Activated CD4-positive, alpha-beta memory T cell treated with anti-CD3 and anti-CD28 coated beads for 36 hours (primary cell): ENCODE measurements at regions of chr9 and their contacts with region 1.

Region 1: DNA sequence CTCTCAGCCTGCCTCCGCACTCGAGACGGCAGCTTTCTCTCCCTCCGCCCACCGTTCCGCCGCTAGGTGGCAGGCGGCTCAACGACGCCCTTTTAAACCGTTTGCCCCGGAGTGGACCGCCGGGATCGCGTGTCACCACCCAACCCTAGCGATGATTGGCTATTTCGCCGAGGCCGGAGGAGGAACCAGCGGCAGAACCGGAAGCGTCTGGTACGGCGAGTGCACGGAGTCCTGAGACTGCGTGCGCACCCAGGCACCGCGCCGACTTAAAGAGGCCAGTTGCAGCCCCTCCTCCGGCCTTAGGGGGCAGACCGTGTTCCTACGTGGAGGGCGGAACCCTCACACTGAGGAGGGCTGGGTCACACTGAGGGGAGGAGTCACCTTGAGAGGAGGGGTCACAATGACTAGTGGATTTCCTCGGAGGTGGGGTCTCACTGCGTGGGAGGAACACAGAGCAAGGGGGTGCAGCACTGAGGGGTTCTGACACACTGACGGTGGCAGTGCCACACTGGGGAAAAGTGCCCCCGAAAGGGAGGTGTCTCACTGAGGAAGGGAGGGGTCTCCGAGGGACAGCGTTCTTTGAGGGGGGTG is 980 bp upstream of the TESK1 start:
- DNase-seq: peak; percentile 100
- H3K4me3 Mint-ChIP-seq: peak overlapping the region; percentile 97
- H3K27ac Mint-ChIP-seq: peak overlapping the region; percentile 98
- H3K4me1 Mint-ChIP-seq: peaks cover 29% of the 10 kb centered on the region
- H3K27me3 Mint-ChIP-seq: no peaks in the 10 kb centered on the region

Region 2: DNA sequence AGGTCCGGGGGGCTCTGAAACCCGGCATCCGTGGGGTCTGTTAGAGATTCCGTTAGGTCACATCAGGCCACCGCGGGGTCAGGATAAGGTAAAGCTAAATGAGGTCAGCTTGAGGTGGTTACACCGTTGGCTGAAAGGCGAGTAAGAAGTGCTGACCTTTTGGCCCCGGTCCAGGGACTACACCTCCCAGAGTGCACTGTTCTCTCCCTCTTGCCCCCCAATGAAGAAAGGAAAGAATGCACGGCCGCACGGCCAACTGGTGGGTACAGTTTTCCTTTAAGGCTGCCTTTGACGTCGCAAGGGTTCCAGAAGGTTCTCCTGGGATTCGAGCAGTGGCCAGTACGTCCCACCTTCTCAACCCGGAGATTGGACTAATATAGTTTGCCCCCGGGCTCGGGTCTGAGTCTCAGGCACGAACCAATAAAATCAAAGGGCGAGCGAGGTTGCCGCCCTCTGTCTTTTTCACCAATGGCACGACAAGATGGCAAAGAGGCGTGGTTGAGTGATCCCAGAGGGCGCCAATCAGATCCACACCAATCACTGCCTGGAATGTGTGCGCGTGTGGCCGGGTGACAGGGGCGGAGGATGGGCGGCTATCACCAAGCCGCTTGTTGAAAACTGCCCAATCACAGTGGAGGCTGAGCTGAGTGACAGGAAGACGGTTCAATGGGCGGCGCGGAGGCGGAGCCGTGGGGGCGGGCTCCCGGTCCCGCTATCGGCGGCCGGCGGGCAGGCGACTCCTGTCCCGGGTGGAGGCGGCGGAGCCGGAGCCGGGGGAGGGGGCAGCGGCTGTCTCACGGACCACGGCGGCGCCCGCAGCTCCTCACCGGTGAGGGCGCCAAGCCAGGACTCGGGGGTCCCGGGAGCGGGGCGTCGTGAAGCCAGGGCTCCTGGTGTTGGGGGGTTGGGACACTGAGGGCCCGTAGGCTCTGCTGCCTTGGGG is 614.8 kb before region 1 on chr9 and contains the start of gene DNAJB5:
- CTCF ChIA-PET with region 1: interaction called, 3 read pairs
- POLR2A ChIA-PET with region 1: no interaction called
- intact Hi-C with region 1: loop called (anchors 1 kb)
- DNase-seq: peak; percentile 99
- H3K4me3 Mint-ChIP-seq: peak within 1 kb of the TSS; percentile 89
- H3K27ac Mint-ChIP-seq: peak within 1 kb of the TSS; percentile 89
- H3K4me1 Mint-ChIP-seq: peaks cover 81% of the 10 kb centered on the region
- H3K27me3 Mint-ChIP-seq: no peaks in the 10 kb centered on the region
- total RNA-seq, gene DNAJB5: 11.5 to 12.0 TPM

Region 3: DNA sequence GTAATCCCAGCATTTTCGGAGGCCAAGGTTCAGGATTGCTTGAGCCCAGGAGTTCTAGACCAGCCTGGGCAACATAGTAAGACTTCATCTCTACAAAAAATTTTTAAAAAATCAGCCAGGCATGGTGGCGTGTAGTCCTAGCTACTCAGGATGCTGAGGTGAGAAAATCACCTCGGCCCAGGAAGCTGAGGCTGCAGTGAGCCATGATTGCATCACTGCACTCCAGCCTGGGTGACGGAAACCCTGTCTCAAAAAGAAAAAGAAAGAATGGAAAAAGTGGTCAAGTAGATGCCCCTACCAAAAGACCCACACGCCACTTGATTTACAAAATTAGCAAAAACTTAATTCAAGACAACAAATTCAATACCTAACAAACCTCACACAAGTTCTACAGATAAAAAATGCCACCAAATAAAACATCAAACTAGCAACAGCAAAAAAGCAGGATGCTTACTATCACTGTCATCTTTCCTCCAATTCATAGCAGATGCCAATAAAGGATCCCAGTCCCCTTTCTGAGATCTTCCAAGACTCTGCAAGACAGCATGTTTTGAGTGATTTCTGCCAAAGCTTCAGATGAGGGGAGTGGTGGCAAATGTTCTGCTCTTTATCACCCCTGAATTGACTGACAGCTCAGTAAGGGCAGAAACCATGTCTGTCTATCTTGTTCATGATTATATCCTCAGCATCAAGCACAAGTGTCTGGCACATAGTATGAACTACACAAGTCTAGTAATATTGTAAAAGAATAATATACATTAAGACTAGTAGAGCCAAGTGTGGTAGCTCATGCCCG is 33.2 kb before region 1 on chr9:
- CTCF ChIA-PET with region 1: interaction called, 6 read pairs
- POLR2A ChIA-PET with region 1: no interaction called
- intact Hi-C with region 1: loop called (anchors 1 kb)
- DNase-seq: peak; percentile 77
- H3K4me3 Mint-ChIP-seq: peak overlapping the region; percentile 47
- H3K27ac Mint-ChIP-seq: peak overlapping the region; percentile 98
- H3K4me1 Mint-ChIP-seq: peaks cover 43% of the 10 kb centered on the region
- H3K27me3 Mint-ChIP-seq: no peaks in the 10 kb centered on the region

Region 4: DNA sequence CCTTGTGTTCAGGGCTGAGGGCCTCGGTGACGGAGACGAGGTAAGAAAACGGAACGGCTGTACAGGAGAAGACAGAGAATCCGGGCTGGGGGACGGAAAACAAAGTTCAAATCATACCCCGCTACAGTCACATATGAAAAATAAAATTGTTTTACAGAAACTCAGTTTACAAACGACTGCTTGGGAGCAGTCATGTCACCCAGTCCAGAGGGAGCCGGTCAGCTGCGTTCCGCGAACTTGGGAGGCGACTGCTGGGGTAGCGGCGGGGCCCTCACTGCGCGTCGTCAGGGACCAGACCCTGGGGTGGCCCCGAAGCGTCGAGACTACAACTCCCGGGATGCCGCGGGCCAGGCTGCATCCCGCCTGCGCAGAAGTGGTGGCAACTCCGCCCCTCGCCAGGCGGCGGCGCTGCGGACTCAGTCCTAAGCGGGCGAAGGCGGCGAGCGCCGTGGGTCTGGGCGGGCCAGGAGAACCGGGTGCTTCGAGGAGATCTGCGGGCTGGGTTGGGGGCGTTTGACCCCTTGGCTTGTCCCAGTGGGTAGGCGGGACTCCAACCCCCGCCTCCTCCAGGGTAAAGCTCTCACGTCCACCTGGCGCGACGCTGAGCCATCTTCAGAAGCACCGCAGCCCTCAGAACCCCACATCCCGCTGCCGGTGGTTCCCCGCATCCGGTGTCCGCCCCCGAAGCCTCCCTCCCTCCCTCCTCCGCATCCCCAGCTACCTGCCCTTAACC is 42.6 kb after region 1 on chr9:
- CTCF ChIA-PET with region 1: interaction called, 29 read pairs
- POLR2A ChIA-PET with region 1: interaction called, 6 read pairs
- intact Hi-C with region 1: loop called (anchors 1 kb)
- DNase-seq: peak; percentile 95
- H3K4me3 Mint-ChIP-seq: peak overlapping the region; percentile 91
- H3K27ac Mint-ChIP-seq: peak overlapping the region; percentile 93
- H3K4me1 Mint-ChIP-seq: peaks cover 49% of the 10 kb centered on the region
- H3K27me3 Mint-ChIP-seq: no peaks in the 10 kb centered on the region

Region 5: GRCh38 chr9:35696525-35697215 is 92.6 kb after region 1 on chr9:
- CTCF ChIA-PET with region 1: interaction called, 27 read pairs
- POLR2A ChIA-PET with region 1: no interaction called
- intact Hi-C with region 1: no loop called
- DNase-seq: peak; percentile 71
- H3K4me3 Mint-ChIP-seq: no peak overlapping the region
- H3K27ac Mint-ChIP-seq: no peak overlapping the region
- H3K4me1 Mint-ChIP-seq: peaks cover 2% of the 10 kb centered on the region
- H3K27me3 Mint-ChIP-seq: no peaks in the 10 kb centered on the region

Region 6: GRCh38 chr9:35829084-35829763 is 225.1 kb after region 1 on chr9 and contains the start of gene TMEM8B:
- CTCF ChIA-PET with region 1: no interaction called
- POLR2A ChIA-PET with region 1: no interaction called
- intact Hi-C with region 1: loop called (anchors 1 kb)
- DNase-seq: peak; percentile 96
- H3K4me3 Mint-ChIP-seq: peak within 1 kb of the TSS; percentile 91
- H3K27ac Mint-ChIP-seq: peak within 1 kb of the TSS; percentile 60
- H3K4me1 Mint-ChIP-seq: peaks cover 23% of the 10 kb centered on the region
- H3K27me3 Mint-ChIP-seq: no peaks in the 10 kb centered on the region
- total RNA-seq, gene TMEM8B: 5.9 to 6.0 TPM